Heart right ventricle (tissue), 16 donors: ENCODE measurements at regions of chr6 and their contacts with region 1.

Region 1: DNA sequence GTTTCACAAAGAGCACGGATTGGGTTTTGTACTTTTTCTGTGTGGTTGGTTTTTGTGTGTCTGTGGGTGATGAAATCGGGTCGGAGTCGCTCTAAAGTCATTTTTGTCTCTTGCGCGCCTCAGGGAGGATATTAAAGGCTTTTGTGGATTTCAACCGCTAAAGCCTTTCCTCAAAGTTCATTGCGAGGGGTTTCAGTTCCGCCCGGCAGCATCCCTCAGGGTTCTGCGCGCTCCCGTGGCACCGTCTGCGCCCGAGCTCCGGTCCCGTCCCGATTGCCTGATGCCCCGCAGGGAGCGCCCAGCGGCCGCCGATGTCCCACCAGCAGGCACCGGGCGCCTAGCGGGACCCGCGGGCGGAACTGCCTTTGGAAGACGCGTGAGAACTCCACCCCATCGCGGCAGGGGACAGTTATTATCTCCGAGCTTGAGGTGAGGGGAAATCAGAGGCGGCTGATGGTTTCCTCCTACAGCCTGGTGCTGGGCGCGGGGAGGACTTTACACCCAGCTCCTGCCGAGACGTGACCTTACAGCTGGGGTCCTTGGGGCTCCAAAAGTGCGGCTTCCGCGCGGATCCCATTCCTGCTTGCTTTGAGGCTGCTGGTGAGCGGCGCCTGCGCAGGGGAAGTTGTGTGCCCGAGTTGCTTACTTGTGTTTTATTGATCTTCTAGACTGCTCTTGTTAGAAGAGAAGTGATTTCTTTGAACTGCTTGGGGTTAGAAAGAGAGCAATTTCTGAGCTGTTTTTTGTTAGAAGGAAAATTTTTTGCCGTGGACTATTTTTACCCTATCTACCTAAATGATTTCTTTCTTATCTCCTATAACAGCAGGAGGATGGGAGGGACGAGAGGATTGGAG is 27.1 kb downstream of the ULBP1 start:
- DNase-seq: no peak
- ATAC-seq: peak in 3 of 8 donors; percentile 11 to 19 (median 15)
- H3K4me3 ChIP-seq: peak overlapping the region in 9 of 10 donors; percentile 10 to 45 (median 29)
- H3K27ac ChIP-seq: no peak overlapping the region
- H3K4me1 ChIP-seq: peaks cover 8 to 23% (median 16%) of the 10 kb centered on the region in 9 donors
- H3K27me3 ChIP-seq: peaks cover 21 to 100% (median 100%) of the 10 kb centered on the region in 7 donors
- CTCF ChIP-seq: no peak

Region 2: GRCh38 chr6:149840345-149841075 is 150.3 kb before region 1 on chr6:
- intact Hi-C with region 1: loop called in 1 of 10 experiments (anchors 10 kb)
- DNase-seq: peak; percentile 79 to 85
- ATAC-seq: peak; percentile 94 to 98 (median 96)
- H3K4me3 ChIP-seq: no peak overlapping the region
- H3K27ac ChIP-seq: peak overlapping the region in 4 of 10 donors; percentile 11 to 51 (median 33)
- H3K4me1 ChIP-seq: peaks cover 0 to 17% (median 11%) of the 10 kb centered on the region in 9 donors
- H3K27me3 ChIP-seq: no peaks in the 10 kb centered on the region
- CTCF ChIP-seq: peak; percentile 33 to 76 (median 60)

Region 3: DNA sequence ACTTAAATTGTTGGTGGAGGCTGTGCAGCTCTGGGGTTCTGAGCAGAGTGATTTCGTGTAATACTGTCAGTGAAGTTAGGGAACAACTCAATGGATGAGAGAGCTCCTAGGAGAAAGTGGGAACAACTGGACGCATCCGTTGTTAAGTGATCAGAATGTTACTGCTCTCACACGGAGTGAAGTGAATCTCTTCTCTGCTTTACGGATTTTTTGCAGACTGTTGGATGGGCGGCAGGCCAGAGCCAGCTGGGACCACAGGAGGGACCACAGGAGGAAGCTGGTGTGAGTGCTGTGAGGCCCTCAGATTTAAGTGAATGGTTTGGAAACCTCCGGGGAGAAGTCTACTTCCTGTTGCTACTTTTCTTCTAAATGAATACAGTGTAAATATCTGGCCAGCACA is 128.3 kb after region 1 on chr6:
- intact Hi-C with region 1: no loop called
- DNase-seq: peak in 1 of 2 donors; percentile 22
- ATAC-seq: peak in 7 of 8 donors; percentile 27 to 65 (median 58)
- H3K4me3 ChIP-seq: no peak overlapping the region
- H3K27ac ChIP-seq: no peak overlapping the region
- H3K4me1 ChIP-seq: peaks cover 0 to 14% (median 6%) of the 10 kb centered on the region in 9 donors
- H3K27me3 ChIP-seq: peaks cover 0 to 1% (median 0%) of the 10 kb centered on the region in 7 donors
- CTCF ChIP-seq: no peak